ENCODE measurements at regions of chr17 and their contacts with region 1.

Region 1: GRCh38 chr17:56653877-56654276 is 60.4 kb downstream of the NOG start:
- DNase-seq: peak; percentile 91
- ATAC-seq: peak; percentile 87
- H3K4me3 ChIP-seq: no peak overlapping the region
- H3K27ac ChIP-seq: no peak overlapping the region
- H3K4me1 ChIP-seq: peaks cover 14% of the 10 kb centered on the region
- H3K27me3 ChIP-seq: no peaks in the 10 kb centered on the region
- CTCF ChIP-seq: peak; percentile 91

Region 2: GRCh38 chr17:56629531-56630075 is 24.3 kb before region 1 on chr17:
- CTCF ChIA-PET with region 1: interaction called, 4 read pairs
- POLR2A ChIA-PET with region 1: no interaction called
- intact Hi-C with region 1: loop called (anchors 2 kb)
- DNase-seq: peak; percentile 71
- ATAC-seq: peak; percentile 97
- H3K4me3 ChIP-seq: no peak overlapping the region; the same call in 1 of the 2 replicates
- H3K27ac ChIP-seq: no peak overlapping the region
- H3K4me1 ChIP-seq: peaks cover 11% of the 10 kb centered on the region; the same call in 1 of the 2 replicates
- H3K27me3 ChIP-seq: no peaks in the 10 kb centered on the region
- CTCF ChIP-seq: peak; percentile 70

Measured in PC-3 (cell line).